GM10248 (cell line): ENCODE measurements at regions of chr9 and their contacts with region 1.

Region 1: GRCh38 chr9:128361986-128362646 is 9.1 kb upstream of the URM1 start:
- DNase-seq: peak; percentile 85
- CTCF ChIP-seq: peak; percentile 95

Region 2: DNA sequence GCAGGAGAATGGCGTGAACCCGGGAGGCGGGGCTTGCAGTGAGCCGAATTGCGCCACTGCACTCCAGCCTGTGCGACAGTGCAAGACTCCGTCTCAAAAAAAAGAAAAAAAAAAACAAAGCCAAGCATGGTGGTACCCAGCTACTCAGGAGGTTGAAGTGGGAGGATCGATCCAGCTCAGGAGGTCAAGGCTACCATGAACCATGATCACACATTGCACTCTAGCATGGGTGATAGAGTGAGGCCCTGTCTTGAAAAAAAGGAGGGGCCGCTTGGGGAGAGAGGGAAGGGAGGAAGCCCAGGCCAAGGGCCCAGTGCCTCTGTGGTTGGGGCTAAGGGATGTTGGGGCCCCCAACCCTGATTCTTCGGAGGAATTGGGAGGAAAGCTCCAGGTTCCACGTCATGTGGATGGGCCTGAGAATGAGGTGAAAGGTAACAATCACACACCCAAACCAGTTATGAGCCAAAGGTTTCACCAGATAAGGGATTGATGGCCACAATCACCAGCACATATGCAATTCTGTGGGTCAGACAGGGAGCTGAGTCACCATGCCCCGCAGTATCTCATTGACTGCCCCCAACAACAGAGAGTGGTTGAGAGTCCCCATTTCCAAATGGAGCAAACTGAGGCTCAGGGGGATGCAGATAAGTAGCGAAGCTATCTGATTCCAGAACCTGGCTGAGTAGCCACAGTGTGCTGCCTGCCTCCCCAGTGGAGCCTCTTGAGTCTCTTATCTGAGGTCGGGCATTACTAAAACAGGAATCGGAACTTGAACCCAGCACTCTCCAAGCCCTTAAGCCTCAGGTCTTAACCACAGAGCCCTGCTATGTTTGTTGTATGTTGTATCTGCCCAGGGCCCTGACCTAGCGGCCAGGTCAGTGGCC is 65.5 kb before region 1 on chr9:
- CTCF ChIA-PET with region 1: interaction called, 12 read pairs
- POLR2A ChIA-PET with region 1: no interaction called
- DNase-seq: no peak
- CTCF ChIP-seq: no peak

Region 3: GRCh38 chr9:128339771-128340690 is 22.1 kb before region 1 on chr9 and contains the start of gene SLC27A4:
- CTCF ChIA-PET with region 1: interaction called, 127 read pairs
- POLR2A ChIA-PET with region 1: no interaction called
- DNase-seq: peak; percentile 90
- CTCF ChIP-seq: no peak

Region 4: GRCh38 chr9:128412120-128412790 is 50.1 kb after region 1 on chr9:
- CTCF ChIA-PET with region 1: interaction called, 59 read pairs
- POLR2A ChIA-PET with region 1: no interaction called
- DNase-seq: no peak
- CTCF ChIP-seq: peak; percentile 50

Region 5: DNA sequence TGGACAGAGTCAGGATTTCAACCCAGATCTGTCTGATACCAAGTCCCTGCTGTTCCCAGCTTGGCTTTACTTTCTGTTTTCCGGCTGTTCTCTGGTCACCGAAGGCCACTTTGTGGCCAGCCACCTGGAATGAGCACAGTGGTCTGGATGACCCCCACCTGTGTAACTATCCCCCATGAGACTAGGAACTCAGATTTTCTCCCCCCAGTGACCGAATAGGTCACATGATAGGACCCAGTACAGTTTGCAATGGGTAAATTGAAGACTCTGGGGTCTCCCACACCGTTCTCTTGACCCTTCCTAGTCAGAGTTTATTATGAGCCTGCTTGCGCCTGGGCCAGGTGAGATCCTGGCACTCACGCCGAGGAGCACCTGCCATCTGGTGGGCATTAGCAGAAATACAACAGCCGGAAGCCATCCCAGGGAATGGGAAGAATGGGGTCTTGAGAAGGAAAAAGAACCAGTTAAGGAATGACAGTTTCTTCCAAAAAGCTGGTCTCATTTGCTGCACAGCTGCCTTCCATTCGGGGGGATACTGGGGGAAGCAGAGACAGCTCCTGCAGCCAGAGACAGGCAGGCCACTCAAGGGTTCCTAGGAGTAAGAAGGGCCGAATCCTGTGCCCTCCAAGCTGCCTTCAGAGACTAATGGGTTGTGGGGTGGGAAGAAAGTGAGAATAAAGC is 565.8 kb after region 1 on chr9:
- CTCF ChIA-PET with region 1: interaction called, 12 read pairs
- POLR2A ChIA-PET with region 1: no interaction called
- DNase-seq: peak; percentile 79
- CTCF ChIP-seq: peak; percentile 93